ENCODE measurements at regions of chr9 and their contacts with region 1.

Region 1: GRCh38 chr9:127955294-127956035 is 17.8 kb upstream of the DPM2 start:
- DNase-seq: peak; percentile 94
- H3K27ac ChIP-seq: peak overlapping the region; percentile 88
- CTCF ChIP-seq: no peak; the same call in 1 of the 2 replicates

Region 2: DNA sequence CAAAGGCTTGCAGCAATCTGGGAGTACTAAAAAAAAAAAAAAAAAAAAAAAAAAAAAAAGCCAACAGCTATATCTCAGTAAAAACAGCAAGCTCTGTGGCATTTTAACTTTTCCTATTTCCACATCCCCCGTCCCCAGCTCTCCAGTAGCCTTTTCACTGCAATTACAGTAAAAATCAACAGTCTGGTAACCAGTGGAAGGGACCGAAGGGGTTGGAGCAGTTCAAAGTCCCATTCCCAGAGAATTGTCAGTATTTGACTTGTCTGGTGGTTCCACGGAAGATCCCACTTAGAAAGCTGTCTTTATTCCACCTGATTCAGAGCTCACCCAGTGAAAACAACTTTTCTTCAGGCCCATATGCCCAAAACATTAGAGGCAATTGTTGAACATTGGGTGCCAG is 1222.5 kb before region 1 on chr9:
- CTCF ChIA-PET with region 1: interaction called, 11 read pairs
- POLR2A ChIA-PET with region 1: no interaction called
- DNase-seq: no peak
- H3K27ac ChIP-seq: no peak overlapping the region
- CTCF ChIP-seq: no peak

Region 3: GRCh38 chr9:127930231-127931091 is 25.0 kb before region 1 on chr9 and contains the start of gene PIP5KL1:
- CTCF ChIA-PET with region 1: no interaction called
- POLR2A ChIA-PET with region 1: no interaction called
- DNase-seq: peak; percentile 99
- H3K27ac ChIP-seq: peak within 1 kb of the TSS; percentile 75
- CTCF ChIP-seq: no peak

Region 4: DNA sequence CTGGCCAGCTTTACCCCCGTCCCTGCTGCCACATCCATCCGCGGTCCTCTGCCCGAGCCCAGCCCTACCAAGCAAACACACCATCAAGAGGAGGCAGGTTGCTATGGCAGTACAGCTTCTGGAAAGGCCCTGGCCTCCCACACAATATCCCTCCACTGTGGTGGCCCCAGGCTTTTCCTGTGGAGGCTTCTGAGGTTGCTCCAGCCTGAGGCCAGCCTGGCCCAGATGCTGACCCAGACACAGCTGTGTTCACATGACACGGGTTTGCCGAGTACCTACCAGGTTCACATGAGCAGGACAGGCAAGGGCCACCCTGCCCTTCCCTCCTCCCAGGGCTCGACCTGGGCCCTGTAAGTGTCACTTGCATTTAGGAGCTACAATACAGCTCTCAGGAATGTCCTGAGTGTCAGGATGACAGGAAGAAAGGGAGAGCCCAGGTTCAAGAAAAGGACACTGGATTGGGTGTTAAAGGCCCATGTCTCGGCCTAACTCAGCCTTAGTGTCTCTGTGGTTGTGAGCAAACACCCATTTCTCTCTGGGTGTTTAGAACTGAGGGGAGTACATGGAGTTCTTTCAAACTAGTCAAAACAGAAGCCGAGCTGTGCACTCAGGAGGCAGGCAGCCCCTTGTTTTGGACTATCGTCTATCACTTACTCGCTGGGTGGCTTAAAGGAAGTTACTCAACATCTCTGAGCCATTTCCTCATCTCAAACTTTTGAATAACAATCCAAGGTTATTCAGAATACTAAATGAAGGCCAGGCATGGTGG is 71.5 kb after region 1 on chr9:
- CTCF ChIA-PET with region 1: no interaction called
- POLR2A ChIA-PET with region 1: no interaction called
- DNase-seq: no peak
- H3K27ac ChIP-seq: peak overlapping the region; percentile 31
- CTCF ChIP-seq: no peak

Measured in RWPE1 (cell line).